GM12878 (cell line): ENCODE measurements at regions of chr20 and their contacts with region 1.

Region 1: DNA sequence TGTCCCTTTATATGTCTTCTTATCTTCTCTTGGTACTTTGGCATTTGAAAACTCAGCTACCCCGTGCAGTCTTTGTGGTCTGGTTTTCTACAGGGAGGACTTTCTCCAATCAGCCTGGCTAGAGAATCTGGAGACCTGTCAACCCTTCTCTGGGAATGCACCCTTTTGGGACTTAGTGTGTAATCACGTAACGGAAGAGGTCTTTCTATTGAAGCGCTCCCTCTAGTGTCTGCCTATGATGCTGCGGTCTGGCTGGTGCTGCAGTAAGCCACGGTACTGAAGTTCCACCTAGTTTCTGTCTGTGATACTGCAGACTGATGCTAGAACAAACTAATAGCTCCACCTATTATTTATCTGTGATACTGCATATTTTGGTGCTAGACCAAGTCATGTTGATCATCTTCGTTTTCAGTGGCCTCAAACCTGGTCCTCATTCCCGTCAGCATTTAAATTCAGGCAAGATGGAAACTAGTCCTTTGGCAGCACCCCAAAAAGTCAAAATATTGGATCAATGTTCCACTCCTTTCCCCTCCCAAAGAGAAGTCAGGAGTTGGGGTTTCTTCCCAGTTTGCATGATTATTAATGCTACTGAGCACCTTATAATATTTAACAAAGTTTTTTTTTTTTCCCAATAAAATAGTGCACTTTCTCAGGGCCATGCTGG is 12.5 kb upstream of the SIRPB2 start:
- DNase-seq: peak; percentile 76
- ATAC-seq: peak; percentile 100
- H3K4me3 ChIP-seq: no peak overlapping the region
- H3K27ac ChIP-seq: no peak overlapping the region
- H3K4me1 ChIP-seq: no peaks in the 10 kb centered on the region
- H3K27me3 ChIP-seq: peaks cover 0 to 7% of the 10 kb centered on the region in 2 experiments; a peak in 1 of 4 replicates
- CTCF ChIP-seq: peak; percentile 98 to 100 (median 100); a peak in 5 of 6 replicates
- EP300 ChIP-seq: no peak
- POLR2A ChIP-seq: no peak
- RAD21 ChIP-seq: peak; percentile 86

Region 2: DNA sequence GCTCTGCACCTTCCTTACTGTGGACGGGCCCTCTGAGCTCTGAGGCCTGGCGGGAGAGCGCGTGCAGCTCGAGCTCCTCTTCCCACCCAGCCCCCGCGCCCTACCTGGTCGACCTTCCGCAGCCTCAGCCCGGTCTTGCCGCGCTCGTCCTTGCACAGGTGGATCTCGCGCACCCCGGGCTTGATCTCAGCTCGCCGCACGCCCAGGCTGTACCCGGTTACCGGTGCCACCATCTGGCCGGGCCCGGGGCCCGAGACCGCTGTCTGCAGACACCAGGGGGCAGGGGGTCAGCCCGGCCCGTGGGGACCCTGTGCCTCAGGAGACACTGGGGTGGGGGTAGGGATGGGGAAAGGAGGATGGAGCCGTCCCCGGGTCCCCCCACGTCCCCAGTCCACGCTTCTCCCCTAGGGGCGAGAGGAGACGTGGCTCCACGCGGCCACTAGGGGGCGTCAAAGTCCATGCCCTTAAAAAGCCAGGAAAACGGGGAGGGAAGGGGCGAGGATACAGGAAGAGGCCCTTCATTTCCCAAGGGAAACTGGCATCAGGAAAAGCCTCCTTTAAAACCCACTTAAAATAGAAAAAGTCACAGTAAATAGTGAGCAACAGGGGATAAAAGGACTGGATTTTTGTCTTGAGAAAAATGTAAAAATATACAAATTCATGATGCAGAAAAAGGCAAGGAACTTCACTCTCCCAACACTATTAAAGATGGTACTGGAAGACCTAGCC is 190.3 kb before region 1 on chr20:
- CTCF ChIA-PET with region 1: interaction called, 12 read pairs
- POLR2A ChIA-PET with region 1: no interaction called
- RAD21 ChIA-PET with region 1: interaction called, 4 read pairs
- SMC1A ChIA-PET with region 1: interaction called, 10 read pairs
- in situ Hi-C with region 1: no loop called
- intact Hi-C with region 1: no loop called
- DNase-seq: no peak
- ATAC-seq: peak; percentile 90
- H3K4me3 ChIP-seq: no peak overlapping the region
- H3K27ac ChIP-seq: no peak overlapping the region
- H3K4me1 ChIP-seq: peaks cover 6% of the 10 kb centered on the region; the same call in 1 of the 2 replicates
- H3K27me3 ChIP-seq: no peaks in the 10 kb centered on the region
- CTCF ChIP-seq: peak; percentile 87 to 92 (median 89)
- EP300 ChIP-seq: no peak
- POLR2A ChIP-seq: no peak
- RAD21 ChIP-seq: peak; percentile 95

Region 3: GRCh38 chr20:1437235-1437904 is 66.3 kb before region 1 on chr20:
- CTCF ChIA-PET with region 1: interaction called, 65 read pairs
- POLR2A ChIA-PET with region 1: no interaction called
- RAD21 ChIA-PET with region 1: interaction called, 16 read pairs
- SMC1A ChIA-PET with region 1: interaction called, 15 read pairs
- in situ Hi-C with region 1: no loop called
- intact Hi-C with region 1: no loop called
- DNase-seq: peak; percentile 40
- ATAC-seq: peak; percentile 77
- H3K4me3 ChIP-seq: no peak overlapping the region
- H3K27ac ChIP-seq: no peak overlapping the region
- H3K4me1 ChIP-seq: peaks cover 11% of the 10 kb centered on the region
- H3K27me3 ChIP-seq: no peaks in the 10 kb centered on the region
- CTCF ChIP-seq: peak; percentile 82 to 84 (median 83)
- EP300 ChIP-seq: no peak
- POLR2A ChIP-seq: no peak
- RAD21 ChIP-seq: peak; percentile 91

Region 4: DNA sequence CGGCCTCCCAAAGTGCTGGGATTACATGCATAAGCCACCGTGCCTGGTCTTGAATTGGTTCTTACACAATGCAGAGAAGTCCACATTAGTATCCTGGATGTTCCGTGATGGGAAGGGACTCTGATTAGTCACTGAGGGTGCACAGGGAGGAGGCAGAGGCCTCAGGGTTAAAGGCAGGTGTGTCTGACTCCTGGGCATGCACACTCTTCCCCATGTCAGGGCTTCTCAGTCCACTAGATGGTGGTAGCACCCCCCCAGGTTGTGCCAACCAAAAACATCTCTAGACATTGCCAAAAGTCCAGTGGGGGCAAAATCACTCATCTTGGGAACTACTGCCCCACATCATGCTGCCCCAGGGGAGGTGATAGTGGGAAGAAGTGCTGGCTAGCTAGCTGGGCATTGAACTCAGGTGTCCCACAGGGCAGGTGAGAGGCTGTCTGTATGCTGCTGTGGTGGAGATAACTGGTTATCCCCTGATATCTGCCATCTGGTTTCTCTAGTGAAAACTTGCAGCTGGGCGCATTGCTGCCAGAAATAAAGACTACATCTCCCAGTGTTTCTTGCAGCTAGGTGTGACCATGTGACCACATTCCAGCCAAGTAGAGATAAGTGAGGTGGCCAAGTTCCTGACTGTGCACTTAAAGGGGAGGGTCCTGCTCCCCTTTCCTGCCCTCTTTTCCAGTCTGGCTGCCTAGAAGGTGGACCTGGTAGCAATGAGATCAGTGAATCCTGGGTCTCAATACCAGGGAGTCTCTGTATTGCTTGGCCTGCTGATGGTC is 28.7 kb before region 1 on chr20:
- CTCF ChIA-PET with region 1: interaction called, 42 read pairs
- POLR2A ChIA-PET with region 1: no interaction called
- RAD21 ChIA-PET with region 1: interaction called, 23 read pairs
- SMC1A ChIA-PET with region 1: interaction called, 24 read pairs
- in situ Hi-C with region 1: no loop called
- intact Hi-C with region 1: loop called (anchors 1 kb)
- DNase-seq: no peak
- ATAC-seq: peak; percentile 50
- H3K4me3 ChIP-seq: no peak overlapping the region
- H3K27ac ChIP-seq: no peak overlapping the region
- H3K4me1 ChIP-seq: peaks cover 2% of the 10 kb centered on the region; the same call in 1 of the 2 replicates
- H3K27me3 ChIP-seq: no peaks in the 10 kb centered on the region; a peak in 2 of 4 replicates
- CTCF ChIP-seq: peak; percentile 27 to 48 (median 40)
- EP300 ChIP-seq: no peak
- POLR2A ChIP-seq: no peak
- RAD21 ChIP-seq: peak; percentile 48; the same call in 1 of the 2 replicates

Region 5: DNA sequence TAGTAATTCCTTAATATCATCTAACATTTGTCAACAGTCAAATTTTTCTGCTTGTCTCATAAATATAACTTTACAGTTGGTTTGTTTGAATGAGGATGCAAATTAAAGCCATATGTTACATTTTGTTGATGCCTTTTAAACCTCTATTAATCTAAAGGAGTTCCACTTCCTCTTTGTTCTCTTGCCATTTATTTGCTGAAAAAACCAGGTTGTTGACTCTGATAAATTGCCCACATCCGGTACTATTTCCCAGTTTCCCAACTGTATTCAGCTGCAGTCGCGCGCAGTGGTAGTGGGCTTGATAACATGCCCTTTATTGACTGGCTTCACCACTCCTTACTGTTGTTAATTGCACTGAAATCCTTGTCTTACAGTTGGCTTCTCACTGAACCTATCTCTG is 20.3 kb after region 1 on chr20:
- CTCF ChIA-PET with region 1: interaction called, 17 read pairs
- POLR2A ChIA-PET with region 1: no interaction called
- RAD21 ChIA-PET with region 1: interaction called, 6 read pairs
- SMC1A ChIA-PET with region 1: interaction called, 13 read pairs
- in situ Hi-C with region 1: no loop called
- intact Hi-C with region 1: no loop called
- DNase-seq: no peak
- ATAC-seq: peak; percentile 83
- H3K4me3 ChIP-seq: no peak overlapping the region
- H3K27ac ChIP-seq: no peak overlapping the region
- H3K4me1 ChIP-seq: peaks cover 5% of the 10 kb centered on the region; the same call in 1 of the 2 replicates
- H3K27me3 ChIP-seq: no peaks in the 10 kb centered on the region; a peak in 1 of 4 replicates
- CTCF ChIP-seq: no peak
- EP300 ChIP-seq: peak; percentile 59 to 65; a peak in 2 of 4 replicates
- POLR2A ChIP-seq: no peak
- RAD21 ChIP-seq: no peak

Region 6: GRCh38 chr20:1764136-1765033 is 260.7 kb after region 1 on chr20:
- CTCF ChIA-PET with region 1: interaction called, 13 read pairs
- POLR2A ChIA-PET with region 1: no interaction called
- RAD21 ChIA-PET with region 1: interaction called, 5 read pairs
- SMC1A ChIA-PET with region 1: interaction called, 19 read pairs
- in situ Hi-C with region 1: no loop called
- intact Hi-C with region 1: no loop called
- DNase-seq: peak; percentile 57
- ATAC-seq: peak; percentile 100
- H3K4me3 ChIP-seq: no peak overlapping the region
- H3K27ac ChIP-seq: no peak overlapping the region
- H3K4me1 ChIP-seq: peaks cover 4% of the 10 kb centered on the region
- H3K27me3 ChIP-seq: peaks cover 0 to 2% of the 10 kb centered on the region in 2 experiments; a peak in 2 of 4 replicates
- CTCF ChIP-seq: peak; percentile 80 to 89 (median 81)
- EP300 ChIP-seq: no peak
- POLR2A ChIP-seq: no peak
- RAD21 ChIP-seq: peak; percentile 79